HEK293 (cell line): ENCODE measurements at regions of chr19 and their contacts with region 1.

Region 1: DNA sequence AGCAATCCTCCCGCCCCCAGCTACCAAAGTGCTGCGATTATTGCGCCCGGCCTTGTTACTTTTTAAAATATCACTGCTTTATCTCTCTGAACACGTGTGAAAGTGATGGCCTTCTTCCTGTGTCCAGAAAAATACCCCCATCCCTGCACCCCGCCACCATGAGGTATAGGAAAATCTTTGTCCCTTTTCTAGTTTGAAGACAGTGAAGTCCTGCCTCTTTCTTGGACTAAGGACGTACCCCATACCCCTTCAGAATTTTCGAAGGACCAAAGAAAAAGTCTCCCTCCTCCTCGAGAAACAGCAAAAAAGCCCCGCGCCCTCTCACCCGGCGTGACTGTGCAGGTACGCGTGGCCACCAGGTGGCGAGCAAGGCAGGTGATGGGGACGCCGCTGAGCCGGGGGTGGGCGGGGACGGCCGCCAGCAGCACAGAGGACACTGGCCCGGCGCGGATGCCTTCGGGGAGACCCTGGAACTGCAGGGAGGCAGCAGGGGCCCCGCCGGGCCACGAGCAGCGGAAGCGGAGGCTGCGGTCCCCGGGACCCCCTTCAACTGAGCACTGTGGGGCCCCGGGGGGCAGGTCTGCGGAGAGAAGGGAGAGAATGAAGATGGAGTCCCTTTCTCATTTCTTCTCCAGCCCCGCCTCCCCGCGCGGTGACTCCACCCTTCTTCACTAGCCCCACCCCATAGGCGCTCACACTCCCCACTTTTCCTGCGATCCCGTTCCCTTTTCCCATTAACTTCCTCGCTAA is 3.2 kb downstream of the VSIG10L start:
- H3K4me3 ChIP-seq: peak overlapping the region; percentile 82
- H3K27ac ChIP-seq: no peak overlapping the region
- H3K4me1 ChIP-seq: 0 out of 2 replicates have a peak, but pooled peaks cover 8% of the 10 kb centered on the region
- CTCF ChIP-seq: peak; percentile 84

Region 2: DNA sequence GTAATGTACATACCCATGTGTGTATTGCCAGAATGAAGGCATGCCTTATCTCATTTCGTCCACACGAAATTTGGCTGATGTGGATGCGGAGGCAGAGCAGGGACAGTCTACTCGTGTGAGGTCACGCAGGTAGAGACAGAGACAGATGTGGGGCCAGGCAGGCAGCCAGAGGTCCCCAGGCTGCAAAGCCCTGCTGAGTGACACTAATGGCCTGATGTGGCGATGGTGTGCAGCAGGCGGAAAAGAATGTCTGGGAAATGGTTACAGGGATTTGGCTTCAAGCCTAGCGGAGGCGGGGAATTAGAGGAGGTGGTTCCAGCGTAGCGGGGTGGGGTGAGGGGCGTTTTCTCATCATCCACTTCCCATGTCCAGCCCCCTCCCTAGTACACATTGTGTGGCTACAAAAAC is 1171.4 kb before region 1 on chr19:
- CTCF ChIA-PET with region 1: no interaction called
- POLR2A ChIA-PET with region 1: no interaction called
- H3K4me3 ChIP-seq: no peak overlapping the region
- H3K27ac ChIP-seq: no peak overlapping the region
- H3K4me1 ChIP-seq: peaks cover 5% of the 10 kb centered on the region; the same call in 1 of the 2 replicates
- CTCF ChIP-seq: no peak

Region 3: DNA sequence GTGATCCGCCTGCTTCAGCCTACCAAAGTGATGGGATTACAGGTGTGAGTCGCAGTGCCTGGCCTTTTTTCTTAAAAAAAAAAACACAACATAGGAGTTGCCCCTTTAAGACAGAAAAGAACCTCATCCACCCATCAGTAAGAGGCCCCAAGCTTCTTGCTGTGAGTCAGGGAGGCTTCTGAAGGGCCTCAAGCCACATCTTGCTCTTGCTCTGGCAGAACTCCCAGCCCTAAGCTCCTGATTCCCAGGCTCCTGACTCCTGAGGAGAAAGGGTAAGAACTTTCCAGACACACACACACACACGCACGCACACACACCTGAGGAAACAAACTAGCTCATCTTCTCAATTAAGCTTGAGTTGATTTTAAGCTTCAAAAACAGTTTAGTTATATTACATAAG is 20.6 kb after region 1 on chr19:
- CTCF ChIA-PET with region 1: interaction called, 5 read pairs
- POLR2A ChIA-PET with region 1: interaction called, 15 read pairs
- H3K4me3 ChIP-seq: no peak overlapping the region
- H3K27ac ChIP-seq: peak overlapping the region; percentile 41; the same call in 1 of the 2 replicates
- H3K4me1 ChIP-seq: peaks cover 18% of the 10 kb centered on the region
- CTCF ChIP-seq: no peak

Region 4: DNA sequence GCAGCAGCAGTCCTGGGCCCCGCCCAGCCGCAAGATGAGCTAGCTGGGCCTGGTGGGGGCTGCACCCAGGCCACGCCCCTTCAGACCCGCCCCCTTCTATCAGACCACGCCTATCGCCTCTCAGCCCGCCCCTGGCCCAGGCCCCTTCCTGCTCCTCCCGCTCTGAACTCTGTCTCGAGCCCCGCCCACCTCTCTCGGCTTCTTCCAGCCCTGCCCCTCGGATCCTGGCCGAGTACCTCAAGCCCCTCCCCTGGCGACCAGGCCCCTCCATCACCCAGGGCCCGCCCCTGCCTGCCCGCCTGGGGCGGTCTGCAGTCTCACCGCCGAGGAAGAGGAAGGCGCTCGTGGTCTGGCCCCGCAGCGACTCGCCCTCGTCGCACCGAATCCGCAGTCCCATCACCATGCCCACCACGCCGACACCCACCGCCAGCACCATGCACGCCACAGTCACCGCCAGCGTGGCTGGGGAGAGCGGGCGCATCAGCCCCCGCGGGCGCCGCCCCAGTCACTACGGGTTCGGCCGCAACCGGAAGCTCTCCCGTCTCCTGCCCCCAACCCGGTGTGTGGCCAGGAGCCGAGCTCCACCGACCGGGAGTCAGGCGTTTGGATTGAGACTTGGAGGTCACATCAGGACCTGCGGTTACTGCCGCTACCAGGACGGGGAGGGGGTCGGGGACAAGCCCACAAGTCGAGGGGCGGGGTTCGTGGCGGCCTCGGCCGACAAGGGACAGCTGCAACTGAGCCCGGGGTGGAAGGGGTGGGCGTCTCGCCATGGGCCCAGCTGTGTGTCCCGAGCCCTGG is 29.0 kb after region 1 on chr19:
- CTCF ChIA-PET with region 1: interaction called, 6 read pairs
- POLR2A ChIA-PET with region 1: interaction called, 37 read pairs
- H3K4me3 ChIP-seq: peak overlapping the region; percentile 78
- H3K27ac ChIP-seq: peak overlapping the region; percentile 85; the same call in 1 of the 2 replicates
- H3K4me1 ChIP-seq: peaks cover 7% of the 10 kb centered on the region
- CTCF ChIP-seq: peak; percentile 45; the same call in 1 of the 2 replicates

Region 5: GRCh38 chr19:51393959-51394836 is 55.5 kb after region 1 on chr19:
- CTCF ChIA-PET with region 1: interaction called, 15 read pairs
- POLR2A ChIA-PET with region 1: interaction called, 19 read pairs
- H3K4me3 ChIP-seq: peak overlapping the region; percentile 76
- H3K27ac ChIP-seq: peak overlapping the region; percentile 35
- H3K4me1 ChIP-seq: peaks cover 4% of the 10 kb centered on the region; the same call in 1 of the 2 replicates
- CTCF ChIP-seq: no peak; the same call in 1 of the 2 replicates

Region 6: DNA sequence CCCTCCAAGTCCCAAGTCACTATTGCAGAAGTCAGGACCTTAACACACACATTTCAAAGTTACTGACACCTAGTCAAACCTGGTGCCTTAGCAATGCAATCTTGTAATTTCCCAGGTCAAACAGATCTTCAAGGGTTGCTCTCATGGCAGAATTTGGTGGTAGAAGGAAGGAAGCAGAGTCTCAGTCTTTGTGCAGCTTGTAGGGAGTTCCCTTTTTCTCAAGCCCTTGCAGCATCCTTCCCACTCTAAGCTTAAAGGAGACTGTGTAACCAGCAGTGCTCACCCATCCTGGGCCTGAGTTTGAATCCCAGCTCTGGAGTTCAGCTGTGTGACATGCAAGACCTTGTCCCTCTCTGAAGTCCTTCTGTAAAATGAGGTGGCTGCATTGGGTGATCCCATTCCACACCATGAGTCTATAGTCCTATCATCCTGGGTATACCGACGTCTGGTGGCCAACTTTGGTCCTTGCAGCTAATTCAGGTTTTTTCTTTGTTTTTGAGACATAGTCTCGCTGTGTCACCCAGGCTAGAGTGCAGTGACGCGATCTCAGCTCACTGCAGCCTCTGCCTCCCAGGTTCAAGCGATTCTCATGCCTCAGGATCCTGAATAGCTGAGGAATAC is 68.9 kb after region 1 on chr19:
- CTCF ChIA-PET with region 1: interaction called, 16 read pairs
- POLR2A ChIA-PET with region 1: no interaction called
- H3K4me3 ChIP-seq: no peak overlapping the region
- H3K27ac ChIP-seq: no peak overlapping the region
- H3K4me1 ChIP-seq: no peaks in the 10 kb centered on the region
- CTCF ChIP-seq: peak; percentile 39; the same call in 1 of the 2 replicates

Region 7: DNA sequence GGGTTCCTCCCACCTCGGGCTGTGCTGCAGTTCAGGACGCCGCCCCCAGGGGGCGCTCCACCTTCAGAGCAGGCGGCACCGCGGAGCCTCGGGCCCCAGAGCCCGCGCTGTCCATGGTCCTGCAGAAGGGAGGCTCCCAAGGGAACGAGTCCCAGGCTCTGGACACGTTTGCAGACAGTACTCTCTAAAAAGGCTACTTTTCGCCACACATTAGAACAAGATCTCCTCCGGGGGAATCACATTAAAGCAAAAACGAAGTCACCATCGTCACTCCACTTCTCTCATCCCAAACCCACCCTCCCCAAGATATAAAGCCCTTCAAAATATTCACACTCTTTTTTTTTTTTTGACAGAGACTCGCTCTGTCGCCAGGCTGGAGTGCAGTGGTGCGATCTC is 83.3 kb after region 1 on chr19:
- CTCF ChIA-PET with region 1: interaction called, 12 read pairs
- POLR2A ChIA-PET with region 1: interaction called, 4 read pairs
- H3K4me3 ChIP-seq: no peak overlapping the region
- H3K27ac ChIP-seq: no peak overlapping the region
- H3K4me1 ChIP-seq: no peaks in the 10 kb centered on the region
- CTCF ChIP-seq: peak; percentile 86